ENCODE measurements at regions of chr2 and their contacts with region 1.

Region 1: DNA sequence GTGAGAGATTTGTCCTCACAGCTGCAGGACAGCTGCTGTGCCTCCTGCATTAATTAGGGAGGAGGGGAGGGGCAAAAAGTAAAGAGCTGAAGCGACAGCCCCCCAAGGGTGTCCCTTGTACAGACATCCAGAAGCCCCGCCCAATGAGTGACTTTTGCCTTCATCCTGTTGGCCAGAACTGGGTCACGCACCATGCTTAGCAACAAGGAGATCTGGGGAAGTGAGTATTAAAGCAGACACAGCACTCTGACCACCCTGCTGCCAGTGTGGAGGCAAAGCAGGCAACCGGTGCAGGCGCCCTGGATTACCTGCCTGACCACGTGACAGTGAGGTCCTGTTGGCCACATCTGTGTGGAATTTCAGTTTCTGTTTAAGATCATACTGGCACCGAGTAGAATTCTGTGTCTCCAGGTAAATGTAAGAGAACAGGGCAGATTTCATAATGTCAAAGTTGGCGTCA is 21.5 kb upstream of the BIN1 start:
- DNase-seq: peak; percentile 58
- ATAC-seq: peak; percentile 86
- H3K4me3 ChIP-seq: no peak overlapping the region
- H3K4me3 Mint-ChIP-seq: peak overlapping the region; percentile 67
- H3K27ac ChIP-seq: no peak overlapping the region
- H3K27ac Mint-ChIP-seq: peak overlapping the region; percentile 56
- H3K4me1 ChIP-seq: peaks cover 15 to 17% of the 10 kb centered on the region in 2 donors
- H3K4me1 Mint-ChIP-seq: peaks cover 18% of the 10 kb centered on the region
- H3K27me3 ChIP-seq: no peaks in the 10 kb centered on the region
- H3K27me3 Mint-ChIP-seq: no peaks in the 10 kb centered on the region
- CTCF ChIP-seq: no peak

Region 2: DNA sequence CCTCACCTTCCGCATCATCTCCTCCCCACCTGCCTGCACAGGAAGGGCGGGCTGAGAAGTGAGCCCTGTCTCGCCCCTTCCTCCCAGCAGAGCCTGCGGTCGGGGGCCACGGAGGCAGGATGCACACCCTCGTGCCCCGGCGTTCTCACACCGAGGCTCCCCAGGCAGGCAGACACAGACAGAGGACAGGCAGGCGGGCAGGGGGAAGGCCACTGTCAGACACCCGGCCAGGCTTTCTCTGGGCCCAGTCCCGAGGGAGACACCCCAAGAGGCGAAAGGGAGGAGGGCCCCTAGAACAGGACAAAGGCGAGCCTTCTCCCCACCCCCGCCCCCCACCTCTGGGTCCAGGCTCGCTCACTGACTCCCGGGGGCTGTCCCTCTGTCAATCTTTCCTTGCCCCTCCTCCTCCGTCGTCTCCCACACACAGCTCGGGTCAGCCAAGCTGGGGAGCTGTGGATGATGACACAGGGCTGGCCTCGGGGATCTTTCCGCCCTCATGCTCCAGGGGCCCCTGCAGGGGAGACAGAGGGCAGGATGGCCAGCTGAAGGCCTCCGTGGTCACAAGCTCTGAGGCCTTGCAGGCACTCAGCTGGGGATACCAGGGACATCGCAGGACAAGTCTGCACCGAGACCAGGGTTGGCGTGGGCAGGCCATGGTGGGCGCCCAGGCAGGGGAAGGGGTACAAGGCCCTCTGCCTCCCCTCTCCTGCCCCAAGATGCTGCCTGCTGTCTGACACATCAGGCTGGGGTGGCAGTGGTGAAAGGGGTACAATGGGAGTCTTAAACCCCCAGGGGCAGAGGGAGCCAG is 46.4 kb before region 1 on chr2:
- CTCF ChIA-PET with region 1: no interaction called
- POLR2A ChIA-PET with region 1: no interaction called
- intact Hi-C with region 1: loop called (anchors 2 kb)
- DNase-seq: peak; percentile 84
- ATAC-seq: peak; percentile 65
- H3K4me3 ChIP-seq: peak overlapping the region in 4 of 5 experiments; percentile 65 to 88 (median 82)
- H3K4me3 Mint-ChIP-seq: peak overlapping the region; percentile 92
- H3K27ac ChIP-seq: peak overlapping the region; percentile 96 to 98
- H3K27ac Mint-ChIP-seq: peak overlapping the region; percentile 99
- H3K4me1 ChIP-seq: peaks cover 78 to 95% of the 10 kb centered on the region in 2 donors
- H3K4me1 Mint-ChIP-seq: peaks cover 94% of the 10 kb centered on the region
- H3K27me3 ChIP-seq: no peaks in the 10 kb centered on the region
- H3K27me3 Mint-ChIP-seq: no peaks in the 10 kb centered on the region
- CTCF ChIP-seq: no peak

Measured in B cell (primary cell).